Activated B cell treated with CpG ODN at 0.5 μM for 24 hours (primary cell): ENCODE measurements at regions of chr16 and their contacts with region 1.

Region 1: GRCh38 chr16:60203525-60204124 is 1469.5 kb upstream of the GOT2 start:
- DNase-seq: no peak
- ATAC-seq: no peak
- H3K4me3 Mint-ChIP-seq: no peak overlapping the region
- H3K27ac Mint-ChIP-seq: no peak overlapping the region
- H3K4me1 Mint-ChIP-seq: no peaks in the 10 kb centered on the region
- H3K27me3 Mint-ChIP-seq: no peaks in the 10 kb centered on the region
- CTCF ChIP-seq: no peak

Region 2: DNA sequence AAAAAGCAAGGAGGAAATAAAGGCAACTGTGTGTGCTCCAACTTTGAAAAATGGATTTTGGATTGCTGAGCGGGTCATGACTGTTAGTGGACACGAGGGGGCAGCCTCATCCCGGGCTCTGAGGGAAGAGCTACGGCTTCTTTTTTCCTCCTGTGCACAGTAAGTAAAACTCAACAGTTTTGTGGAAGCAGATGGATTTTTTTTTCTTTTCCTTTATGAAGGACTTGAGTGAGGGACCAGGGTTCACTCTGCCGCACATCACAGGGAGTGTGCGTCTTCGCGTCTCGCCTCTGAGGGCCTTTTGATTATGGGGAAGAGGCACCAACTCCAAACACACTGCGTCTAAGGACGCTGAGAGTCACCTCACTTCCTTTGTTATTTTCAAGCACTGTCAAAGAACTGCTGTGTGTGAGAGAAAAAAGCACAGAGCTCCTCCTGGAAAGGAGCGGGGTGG is 1389.2 kb before region 1 on chr16:
- CTCF ChIA-PET with region 1: no interaction called
- POLR2A ChIA-PET with region 1: no interaction called
- intact Hi-C with region 1: loop called (anchors 2 kb)
- DNase-seq: no peak
- ATAC-seq: no peak
- H3K4me3 Mint-ChIP-seq: peak overlapping the region; percentile 26
- H3K27ac Mint-ChIP-seq: no peak overlapping the region
- H3K4me1 Mint-ChIP-seq: peaks cover 3% of the 10 kb centered on the region
- H3K27me3 Mint-ChIP-seq: peaks cover 2% of the 10 kb centered on the region
- CTCF ChIP-seq: no peak